PC-9 (cell line): ENCODE measurements at regions of chr18 and their contacts with region 1.

Region 1: DNA sequence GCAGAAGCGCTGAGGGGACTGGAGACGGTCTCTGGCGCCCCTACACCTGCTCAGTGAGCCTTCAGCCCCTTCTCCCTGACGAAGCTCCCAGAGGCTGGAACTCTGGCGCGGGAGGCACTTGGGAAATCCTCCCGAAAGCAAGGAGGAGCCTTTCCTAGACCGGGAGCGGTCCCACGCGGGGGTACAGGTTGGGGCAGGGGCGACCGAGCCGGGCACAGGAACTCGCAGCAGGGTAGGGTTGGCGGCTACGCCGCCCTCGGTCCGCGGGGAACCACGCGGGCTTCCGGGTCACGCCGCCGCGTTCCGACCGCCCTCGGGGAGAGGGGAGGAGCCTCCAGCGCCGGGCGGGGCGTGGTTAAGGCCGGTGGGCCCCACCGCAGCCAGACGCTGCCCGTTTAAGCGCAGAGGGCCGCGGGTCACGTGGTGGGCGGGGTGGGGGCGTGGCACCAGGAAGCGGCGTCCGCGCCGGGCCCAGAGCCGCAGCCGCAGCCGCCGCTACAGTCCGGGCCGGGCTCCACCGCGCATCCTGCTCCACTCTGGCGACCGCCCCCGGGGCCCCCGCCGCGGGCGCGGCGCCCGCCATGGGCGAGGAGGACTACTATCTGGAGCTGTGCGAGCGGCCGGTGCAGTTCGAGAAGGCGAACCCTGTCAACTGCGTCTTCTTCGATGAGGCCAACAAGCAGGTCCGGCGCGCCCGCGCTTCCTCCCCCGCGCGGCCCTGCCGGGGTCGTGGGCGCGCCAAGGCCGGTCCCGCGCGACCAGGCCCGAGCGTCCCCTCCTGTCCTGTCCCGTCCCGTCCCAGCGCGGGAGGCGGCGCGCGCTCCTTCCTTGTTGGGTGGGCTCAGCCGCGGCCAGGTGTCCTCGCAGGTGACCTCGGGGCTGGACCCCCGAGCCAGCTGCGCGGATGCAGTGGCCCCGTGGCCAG is at the start of gene RMC1:
- DNase-seq: peak; percentile 73 to 93
- H3K4me3 ChIP-seq: peak within 1 kb of the TSS; percentile 77
- H3K27ac ChIP-seq: peak within 1 kb of the TSS; percentile 64
- H3K4me1 ChIP-seq: peaks cover 13% of the 10 kb centered on the region
- H3K27me3 ChIP-seq: no peaks in the 10 kb centered on the region
- CTCF ChIP-seq: no peak
- total RNA-seq, gene RMC1: 14.5 and 19.6 TPM in 2 replicates

Region 2: GRCh38 chr18:22813648-22814328 is 689.5 kb before region 1 on chr18:
- CTCF ChIA-PET with region 1: no interaction called
- POLR2A ChIA-PET with region 1: no interaction called
- intact Hi-C with region 1: loop called (anchors 10 kb)
- DNase-seq: peak in 1 of 2 experiments; percentile 39
- H3K4me3 ChIP-seq: no peak overlapping the region
- H3K27ac ChIP-seq: no peak overlapping the region
- H3K4me1 ChIP-seq: 0 out of 2 replicates have a peak, but pooled peaks cover 5% of the 10 kb centered on the region
- H3K27me3 ChIP-seq: no peaks in the 10 kb centered on the region
- CTCF ChIP-seq: peak; percentile 72

Region 3: GRCh38 chr18:23422672-23423418 is 80.5 kb before region 1 on chr18:
- CTCF ChIA-PET with region 1: no interaction called
- POLR2A ChIA-PET with region 1: no interaction called
- intact Hi-C with region 1: loop called (anchors 5 kb)
- DNase-seq: peak; percentile 88 to 99
- H3K4me3 ChIP-seq: peak overlapping the region; percentile 26; the same call in 1 of the 2 replicates
- H3K27ac ChIP-seq: peak overlapping the region; percentile 68
- H3K4me1 ChIP-seq: peaks cover 43% of the 10 kb centered on the region
- H3K27me3 ChIP-seq: no peaks in the 10 kb centered on the region
- CTCF ChIP-seq: no peak